Caco-2 (cell line): ENCODE measurements at regions of chr1 and their contacts with region 1.

Region 1: GRCh38 chr1:212665241-212666115 is 34.2 kb downstream of the BATF3 start:
- DNase-seq: peak; percentile 76 to 90
- H3K4me3 ChIP-seq: peak overlapping the region; percentile 89
- H3K4me3 Mint-ChIP-seq: peak overlapping the region; percentile 74
- H3K27ac Mint-ChIP-seq: peak overlapping the region; percentile 35
- H3K4me1 ChIP-seq: no peaks in the 10 kb centered on the region
- H3K4me1 Mint-ChIP-seq: peaks cover 6% of the 10 kb centered on the region
- H3K27me3 ChIP-seq: no peaks in the 10 kb centered on the region
- H3K27me3 Mint-ChIP-seq: peaks cover 12% of the 10 kb centered on the region
- CTCF ChIP-seq: peak; percentile 94 to 98

Region 2: GRCh38 chr1:212440419-212440818 is 225.1 kb before region 1 on chr1:
- CTCF ChIA-PET with region 1: no interaction called
- POLR2A ChIA-PET with region 1: no interaction called
- intact Hi-C with region 1: no loop called
- DNase-seq: no peak
- H3K4me3 ChIP-seq: no peak overlapping the region
- H3K4me3 Mint-ChIP-seq: no peak overlapping the region
- H3K27ac Mint-ChIP-seq: no peak overlapping the region
- H3K4me1 ChIP-seq: no peaks in the 10 kb centered on the region
- H3K4me1 Mint-ChIP-seq: peaks cover 6% of the 10 kb centered on the region
- H3K27me3 ChIP-seq: no peaks in the 10 kb centered on the region
- H3K27me3 Mint-ChIP-seq: no peaks in the 10 kb centered on the region
- CTCF ChIP-seq: no peak

Region 3: GRCh38 chr1:212477014-212477679 is 188.3 kb before region 1 on chr1:
- CTCF ChIA-PET with region 1: interaction called, 10 read pairs
- POLR2A ChIA-PET with region 1: no interaction called
- intact Hi-C with region 1: no loop called
- DNase-seq: peak; percentile 88 to 91
- H3K4me3 ChIP-seq: no peak overlapping the region
- H3K4me3 Mint-ChIP-seq: no peak overlapping the region
- H3K27ac Mint-ChIP-seq: no peak overlapping the region
- H3K4me1 ChIP-seq: peaks cover 5% of the 10 kb centered on the region
- H3K4me1 Mint-ChIP-seq: peaks cover 7% of the 10 kb centered on the region
- H3K27me3 ChIP-seq: no peaks in the 10 kb centered on the region
- H3K27me3 Mint-ChIP-seq: no peaks in the 10 kb centered on the region
- CTCF ChIP-seq: peak; percentile 94 to 95

Region 4: DNA sequence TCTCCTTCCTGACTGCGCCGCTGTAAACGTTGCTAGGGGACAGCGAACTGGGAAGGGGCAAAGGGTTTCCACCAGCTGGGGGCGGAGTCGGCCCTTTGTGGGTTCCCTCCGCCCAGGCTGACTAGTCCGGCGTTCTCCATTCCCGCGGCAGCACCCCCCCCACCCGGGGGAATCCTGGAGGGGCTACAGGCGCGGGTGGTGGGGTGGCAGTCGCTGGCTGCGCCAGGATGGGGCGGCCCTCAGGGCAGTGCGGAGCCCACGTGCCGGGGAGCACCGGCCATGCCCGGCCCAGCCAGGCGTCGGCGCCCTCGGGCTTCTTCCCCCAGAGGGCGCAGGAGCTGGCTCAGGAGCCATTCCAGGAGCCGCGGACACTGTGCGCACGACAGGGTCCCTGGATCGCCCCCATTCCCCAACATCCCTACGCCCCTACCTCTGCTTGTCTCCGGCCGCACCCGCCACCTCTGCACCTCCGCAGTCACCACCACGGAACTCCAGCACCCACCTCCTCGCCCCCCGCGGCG is 33.7 kb after region 1 on chr1:
- CTCF ChIA-PET with region 1: interaction called, 14 read pairs
- POLR2A ChIA-PET with region 1: no interaction called
- intact Hi-C with region 1: loop called (anchors 1 kb)
- DNase-seq: peak; percentile 46 to 76
- H3K4me3 ChIP-seq: peak overlapping the region; percentile 58
- H3K4me3 Mint-ChIP-seq: peak overlapping the region; percentile 73
- H3K27ac Mint-ChIP-seq: no peak overlapping the region
- H3K4me1 ChIP-seq: peaks cover 37% of the 10 kb centered on the region
- H3K4me1 Mint-ChIP-seq: peaks cover 22% of the 10 kb centered on the region
- H3K27me3 ChIP-seq: peaks cover 8% of the 10 kb centered on the region
- H3K27me3 Mint-ChIP-seq: peaks cover 35% of the 10 kb centered on the region
- CTCF ChIP-seq: peak in 1 of 2 experiments; percentile 73

Region 5: DNA sequence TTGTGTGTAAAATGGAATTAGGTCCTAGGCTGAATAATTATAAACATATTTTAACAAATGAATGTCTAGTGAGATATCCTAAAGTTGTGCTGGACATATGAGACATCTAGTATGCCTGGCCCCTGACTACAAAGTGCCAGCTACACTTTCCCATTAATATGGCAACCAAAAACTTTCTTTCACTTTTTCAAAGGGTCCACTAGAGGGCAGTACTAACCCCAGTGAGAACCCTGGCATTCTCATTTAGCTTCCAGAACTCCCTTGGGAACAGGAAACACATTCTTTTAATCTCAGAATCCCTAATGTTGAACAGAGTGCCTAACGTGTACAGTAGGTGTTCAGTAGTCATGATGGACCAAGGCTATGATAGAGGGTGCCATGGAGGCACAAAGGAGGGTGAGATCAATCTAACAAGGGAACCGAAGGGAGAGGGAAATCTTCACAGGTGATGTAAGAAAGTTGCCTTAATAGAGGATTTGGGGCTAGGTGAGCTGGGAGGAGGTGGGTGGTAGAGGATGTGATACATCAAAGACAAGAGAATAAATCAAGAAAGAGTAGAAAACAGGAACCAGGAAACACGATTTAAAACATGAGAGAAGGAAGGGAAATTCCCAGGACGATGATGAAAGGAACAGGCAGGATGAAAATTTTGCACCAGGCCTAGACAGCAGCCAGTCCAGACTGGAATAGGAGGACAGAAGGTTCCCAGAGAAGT is 84.5 kb after region 1 on chr1:
- CTCF ChIA-PET with region 1: interaction called, 11 read pairs
- POLR2A ChIA-PET with region 1: no interaction called
- intact Hi-C with region 1: loop called (anchors 1 kb)
- DNase-seq: peak in 1 of 2 experiments; percentile 47
- H3K4me3 ChIP-seq: no peak overlapping the region
- H3K4me3 Mint-ChIP-seq: no peak overlapping the region
- H3K27ac Mint-ChIP-seq: peak overlapping the region; percentile 3
- H3K4me1 ChIP-seq: no peaks in the 10 kb centered on the region
- H3K4me1 Mint-ChIP-seq: peaks cover 8% of the 10 kb centered on the region
- H3K27me3 ChIP-seq: no peaks in the 10 kb centered on the region
- H3K27me3 Mint-ChIP-seq: no peaks in the 10 kb centered on the region
- CTCF ChIP-seq: peak; percentile 77 to 80

Region 6: GRCh38 chr1:212994926-212995325 is 329.4 kb after region 1 on chr1:
- CTCF ChIA-PET with region 1: interaction called, 4 read pairs
- POLR2A ChIA-PET with region 1: interaction called, 3 read pairs
- intact Hi-C with region 1: loop called (anchors 1 kb)
- DNase-seq: no peak
- H3K4me3 ChIP-seq: no peak overlapping the region
- H3K4me3 Mint-ChIP-seq: no peak overlapping the region
- H3K27ac Mint-ChIP-seq: no peak overlapping the region
- H3K4me1 ChIP-seq: no peaks in the 10 kb centered on the region
- H3K4me1 Mint-ChIP-seq: no peaks in the 10 kb centered on the region
- H3K27me3 ChIP-seq: no peaks in the 10 kb centered on the region
- H3K27me3 Mint-ChIP-seq: no peaks in the 10 kb centered on the region
- CTCF ChIP-seq: no peak